ENCODE measurements at regions of chr1 and their contacts with region 1.

Region 1: DNA sequence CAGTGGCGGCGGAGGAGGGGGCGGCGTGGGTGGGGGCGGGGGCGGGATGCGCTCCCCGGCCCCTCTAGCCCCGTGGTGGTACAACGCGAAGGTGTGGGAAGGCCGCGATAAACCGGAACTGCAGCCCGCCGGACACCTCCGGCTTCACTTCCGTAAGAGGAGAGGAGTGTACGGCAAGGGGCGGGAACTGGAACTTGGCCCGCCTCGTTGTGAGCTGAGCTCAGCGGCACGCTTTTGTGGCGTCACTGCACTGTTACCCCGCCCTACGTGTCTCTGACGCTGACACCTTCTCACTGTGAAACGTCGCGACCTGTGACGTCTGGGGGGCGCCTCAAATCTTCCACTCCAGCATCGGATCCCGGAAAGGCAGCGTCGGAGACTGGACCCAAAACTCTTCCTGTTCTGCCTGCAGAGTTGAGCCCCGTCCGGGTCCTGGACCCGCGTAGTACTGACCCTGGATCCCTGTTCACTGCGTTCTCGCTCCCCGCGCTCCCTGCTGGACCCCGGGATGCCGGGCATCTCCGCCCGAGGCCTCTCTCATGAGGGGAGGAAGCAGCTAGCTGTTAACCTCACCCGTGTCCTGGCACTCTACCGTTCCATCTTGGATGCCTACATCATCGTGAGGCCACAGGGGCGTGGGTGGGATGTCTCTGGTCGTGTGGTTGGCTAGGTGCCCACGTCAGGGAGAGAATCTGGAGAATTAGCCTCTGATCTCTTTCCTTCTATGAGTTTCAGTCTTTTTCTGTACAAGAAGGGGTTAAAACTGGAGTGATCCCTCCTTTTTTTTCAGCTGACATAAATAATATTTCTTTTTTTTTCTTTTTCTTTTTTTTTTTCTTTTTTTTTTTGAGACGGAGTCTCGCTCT is at the start of gene ISG20L2:
- DNase-seq: peak; percentile 97
- ATAC-seq: peak; percentile 85
- H3K4me3 ChIP-seq: peak within 1 kb of the TSS; percentile 92 to 93
- H3K27ac ChIP-seq: peak within 1 kb of the TSS; percentile 81
- H3K4me1 ChIP-seq: peaks cover 24 to 34% of the 10 kb centered on the region in 2 experiments
- H3K27me3 ChIP-seq: no peaks in the 10 kb centered on the region
- CTCF ChIP-seq: no peak
- POLR2A ChIP-seq: no peak
- RAD21 ChIP-seq: no peak
- total RNA-seq, gene ISG20L2: 41.7 TPM

Region 2: DNA sequence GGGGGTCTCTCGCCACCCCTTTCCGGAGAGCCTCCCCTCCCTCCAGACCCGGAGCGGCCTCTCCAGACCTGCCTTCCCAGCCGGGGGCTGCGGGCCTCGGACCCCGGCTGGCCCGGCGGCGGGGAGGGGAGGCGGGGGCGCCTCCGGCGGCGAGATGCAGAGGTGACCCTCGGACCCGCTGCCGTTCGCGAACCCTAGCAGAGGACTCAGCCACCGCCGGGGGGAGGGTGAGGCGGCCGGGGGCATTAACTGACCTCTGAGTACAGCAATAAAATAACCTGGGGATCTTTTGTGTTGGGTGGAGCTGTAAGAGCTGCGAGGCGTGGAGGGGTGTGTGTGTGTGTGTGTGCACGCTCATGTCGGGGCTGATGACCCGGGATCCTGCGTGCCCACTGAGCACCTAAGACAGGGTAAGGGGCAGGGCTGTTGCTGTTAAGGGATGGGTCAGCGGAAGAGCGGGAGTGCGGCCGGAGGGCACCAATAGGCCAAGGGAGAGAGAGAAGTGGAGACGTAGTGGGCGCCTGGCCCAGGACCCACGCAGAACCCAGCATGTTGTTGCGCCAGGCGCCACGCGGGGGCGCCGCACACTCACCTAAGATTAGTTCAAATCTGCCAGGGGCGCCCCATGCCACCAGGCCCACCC is 103.3 kb before region 1 on chr1:
- CTCF ChIA-PET with region 1: interaction called, 13 read pairs
- POLR2A ChIA-PET with region 1: interaction called, 4 read pairs
- RAD21 ChIA-PET with region 1: no interaction called
- intact Hi-C with region 1: loop called (anchors 1 kb)
- DNase-seq: no peak
- ATAC-seq: peak; percentile 80
- H3K4me3 ChIP-seq: peak overlapping the region; percentile 33 to 46
- H3K27ac ChIP-seq: no peak overlapping the region
- H3K4me1 ChIP-seq: peaks cover 3 to 7% of the 10 kb centered on the region in 2 experiments; a peak in 2 of 4 replicates
- H3K27me3 ChIP-seq: no peaks in the 10 kb centered on the region
- CTCF ChIP-seq: peak; percentile 68 to 91 (median 84); a peak in 5 of 6 replicates
- POLR2A ChIP-seq: no peak
- RAD21 ChIP-seq: peak; percentile 73

Region 3: DNA sequence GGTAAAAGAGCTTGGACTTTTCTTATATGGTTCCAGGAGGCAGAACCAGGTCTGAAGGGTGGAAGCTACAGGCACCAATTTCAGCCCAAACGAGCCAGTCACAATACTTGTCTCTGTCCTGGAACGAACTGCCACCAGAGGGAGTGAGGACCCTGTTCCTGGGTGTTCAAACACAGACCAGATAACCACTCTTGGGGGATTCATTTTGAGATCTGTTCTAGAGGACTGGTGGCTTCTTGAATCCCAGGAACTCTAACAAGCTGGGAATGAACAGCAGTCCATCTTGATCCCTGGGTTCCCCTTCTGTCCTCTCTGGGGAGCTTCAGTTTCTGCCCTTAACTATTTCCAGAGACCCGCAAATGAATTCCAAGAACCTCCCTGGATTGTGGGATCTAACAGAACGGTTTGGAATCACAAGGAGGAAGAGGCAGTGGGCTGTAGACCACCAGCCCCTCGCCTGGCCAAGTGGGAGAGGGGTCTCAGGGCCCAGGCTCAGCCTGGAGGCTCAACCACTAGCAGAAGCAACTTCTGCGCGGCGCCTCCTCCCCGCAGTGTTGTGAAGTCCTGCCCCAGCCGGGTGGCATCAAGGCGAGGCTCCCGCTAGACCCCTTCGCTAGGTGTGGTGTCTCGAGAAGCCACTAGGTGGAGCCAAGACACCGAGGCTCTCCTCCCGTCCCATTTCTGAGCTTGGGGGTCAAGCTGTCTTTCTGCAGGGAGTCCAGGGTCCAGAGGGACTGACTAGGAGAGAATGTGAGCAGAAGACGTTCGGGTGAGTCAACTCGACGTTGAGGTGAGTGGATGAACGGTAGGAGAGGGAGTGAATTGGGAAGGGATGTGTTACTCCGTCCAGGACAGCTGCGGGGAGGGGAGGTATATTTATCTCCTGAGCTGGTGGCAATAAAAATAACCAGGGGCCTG is 39.5 kb before region 1 on chr1:
- CTCF ChIA-PET with region 1: interaction called, 508 read pairs
- POLR2A ChIA-PET with region 1: interaction called, 69 read pairs
- RAD21 ChIA-PET with region 1: interaction called, 62 to 67 read pairs
- intact Hi-C with region 1: loop called (anchors 1 kb)
- DNase-seq: peak; percentile 81
- ATAC-seq: peak; percentile 77
- H3K4me3 ChIP-seq: peak overlapping the region; percentile 41 to 55
- H3K27ac ChIP-seq: peak overlapping the region; percentile 49
- H3K4me1 ChIP-seq: peaks cover 70 to 90% of the 10 kb centered on the region in 2 experiments
- H3K27me3 ChIP-seq: no peaks in the 10 kb centered on the region
- CTCF ChIP-seq: peak in 2 of 3 experiments; percentile 69 to 87; a peak in 4 of 6 replicates
- POLR2A ChIP-seq: no peak
- RAD21 ChIP-seq: no peak

Region 4: DNA sequence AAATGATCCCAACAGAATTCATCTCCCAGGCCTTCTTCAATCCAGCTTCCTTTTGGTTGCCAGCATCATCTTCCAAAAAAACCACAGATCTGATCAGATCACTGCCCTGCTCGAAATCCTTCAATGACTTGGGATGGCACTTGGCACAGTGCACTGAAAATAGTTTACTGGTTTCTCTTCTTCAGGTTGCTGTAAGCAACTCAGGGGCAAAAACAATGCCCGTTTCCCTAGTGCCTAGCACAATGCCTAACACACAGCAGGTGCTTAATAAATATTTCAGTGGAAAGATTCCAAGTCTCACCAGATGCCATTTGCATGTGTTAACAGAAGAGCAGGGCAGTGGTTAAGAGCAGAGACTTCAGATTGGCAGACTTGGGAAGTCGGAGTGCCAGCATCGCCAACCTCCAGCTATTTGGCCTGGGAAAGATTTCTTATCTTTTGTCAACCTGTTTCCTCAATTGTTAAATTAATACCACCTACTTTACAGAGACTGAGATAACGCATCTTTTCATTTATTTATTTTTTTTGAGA is 11.5 kb before region 1 on chr1:
- CTCF ChIA-PET with region 1: interaction called, 59 read pairs
- POLR2A ChIA-PET with region 1: interaction called, 22 read pairs
- RAD21 ChIA-PET with region 1: no interaction called
- intact Hi-C with region 1: no loop called
- DNase-seq: no peak
- ATAC-seq: no peak
- H3K4me3 ChIP-seq: no peak overlapping the region
- H3K27ac ChIP-seq: no peak overlapping the region
- H3K4me1 ChIP-seq: peaks cover 27 to 29% of the 10 kb centered on the region in 2 experiments
- H3K27me3 ChIP-seq: no peaks in the 10 kb centered on the region
- CTCF ChIP-seq: no peak
- POLR2A ChIP-seq: no peak
- RAD21 ChIP-seq: no peak

Region 5: DNA sequence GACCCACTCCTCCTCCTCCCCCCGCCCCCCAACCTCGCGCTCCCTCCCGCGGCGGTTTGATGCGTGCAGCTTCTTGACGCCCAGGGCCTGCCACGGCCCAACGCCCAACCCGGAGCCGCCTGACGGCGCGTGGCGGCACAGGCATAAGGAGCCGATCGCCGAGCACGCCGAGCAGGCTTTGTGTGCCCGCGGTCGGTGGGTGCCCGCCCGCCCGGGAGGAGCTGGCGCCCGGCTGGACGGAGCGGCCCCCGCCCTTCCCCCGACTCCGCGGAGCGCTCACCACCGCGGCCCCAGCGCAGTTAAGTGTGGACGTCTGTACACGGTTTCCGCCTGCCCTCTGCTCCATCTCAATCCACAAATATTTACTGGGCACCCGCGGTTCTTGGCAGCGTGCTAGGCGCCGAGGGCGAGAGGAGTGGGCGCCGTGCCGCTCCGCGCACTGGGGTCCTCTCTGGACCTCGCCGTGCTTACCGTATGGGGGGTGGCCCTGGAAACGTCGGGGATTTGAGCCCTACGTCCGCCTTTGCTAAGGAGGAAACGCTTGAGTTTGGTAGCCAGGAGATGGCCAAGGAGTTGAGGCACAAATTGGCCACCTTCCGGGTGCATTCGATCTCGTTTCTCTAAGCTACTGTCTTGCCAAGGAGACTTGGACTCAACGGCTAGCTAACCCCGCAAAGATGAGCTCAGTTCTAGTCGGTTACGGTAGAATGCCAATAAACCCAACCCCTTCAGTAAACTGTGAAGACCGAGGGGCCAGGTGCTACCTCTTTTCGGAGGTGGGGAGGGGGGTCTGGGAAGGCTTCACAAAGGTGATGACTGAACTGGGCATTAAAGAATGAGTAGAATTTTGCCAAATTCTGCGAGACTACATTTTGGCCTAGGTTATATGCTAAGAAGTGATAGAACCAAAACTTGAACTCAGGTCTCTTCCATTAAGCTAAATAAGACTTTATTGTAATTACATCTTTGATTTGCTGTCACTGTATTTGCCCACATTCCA is 23.2 kb after region 1 on chr1:
- CTCF ChIA-PET with region 1: interaction called, 12 read pairs
- POLR2A ChIA-PET with region 1: interaction called, 11 read pairs
- RAD21 ChIA-PET with region 1: interaction called, 3 read pairs
- intact Hi-C with region 1: no loop called
- DNase-seq: peak; percentile 90
- ATAC-seq: peak; percentile 65
- H3K4me3 ChIP-seq: peak overlapping the region; percentile 67 to 97
- H3K27ac ChIP-seq: peak overlapping the region; percentile 99
- H3K4me1 ChIP-seq: peaks cover 22 to 43% of the 10 kb centered on the region in 2 experiments
- H3K27me3 ChIP-seq: no peaks in the 10 kb centered on the region
- CTCF ChIP-seq: no peak
- POLR2A ChIP-seq: peak; percentile 49
- RAD21 ChIP-seq: no peak

Region 6: DNA sequence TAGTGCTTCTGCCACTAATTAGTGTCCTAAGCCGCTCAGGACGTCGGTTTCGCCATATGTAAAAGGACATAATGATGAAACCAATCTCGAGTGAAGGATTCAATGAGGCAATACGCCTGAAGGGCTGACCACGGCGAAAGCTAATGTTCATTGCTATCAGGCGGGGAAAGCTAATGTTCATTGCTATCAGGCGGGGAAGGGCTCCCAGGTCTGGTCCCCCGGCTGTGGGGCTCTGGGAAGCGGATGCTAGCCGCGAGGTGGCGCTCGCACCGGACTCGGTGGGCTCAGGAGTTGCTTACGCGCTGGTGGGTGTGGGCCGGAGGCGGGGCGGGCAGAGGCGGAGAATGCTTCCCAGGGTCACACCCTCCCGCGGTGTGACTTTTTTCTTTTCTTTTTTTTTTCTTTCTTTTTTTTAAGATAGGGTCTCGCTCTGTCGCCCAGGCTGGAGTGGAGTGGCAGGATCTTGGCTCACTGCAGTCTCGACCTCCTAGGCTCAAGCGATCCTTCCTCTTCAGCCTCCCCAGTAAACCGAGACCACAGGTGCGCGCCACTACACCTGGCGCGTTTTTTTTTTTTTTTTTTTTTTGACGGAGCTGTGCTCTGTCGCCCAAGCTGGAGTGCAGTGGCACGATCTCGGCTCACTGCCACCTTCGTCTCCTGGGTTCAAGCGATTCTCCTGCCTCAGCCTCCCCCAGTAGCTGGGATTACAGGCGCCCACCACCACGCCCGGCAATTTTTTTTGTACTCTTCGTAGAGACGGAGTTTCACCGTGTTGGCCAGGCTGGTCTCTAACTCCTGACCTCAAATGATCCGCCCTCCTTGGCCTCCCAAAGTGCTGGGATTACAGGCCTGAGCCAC is 163.6 kb after region 1 on chr1:
- CTCF ChIA-PET with region 1: interaction called, 26 read pairs
- POLR2A ChIA-PET with region 1: no interaction called
- RAD21 ChIA-PET with region 1: interaction called, 3 to 5 read pairs
- intact Hi-C with region 1: loop called (anchors 1 kb)
- DNase-seq: peak; percentile 75
- ATAC-seq: peak; percentile 77
- H3K4me3 ChIP-seq: peak overlapping the region in 1 of 2 experiments; percentile 18; a peak in 1 of 4 replicates
- H3K27ac ChIP-seq: no peak overlapping the region
- H3K4me1 ChIP-seq: peaks cover 24 to 60% of the 10 kb centered on the region in 2 experiments
- H3K27me3 ChIP-seq: no peaks in the 10 kb centered on the region
- CTCF ChIP-seq: peak in 2 of 3 experiments; percentile 86 to 89; a peak in 4 of 6 replicates
- POLR2A ChIP-seq: no peak
- RAD21 ChIP-seq: no peak

Region 7: DNA sequence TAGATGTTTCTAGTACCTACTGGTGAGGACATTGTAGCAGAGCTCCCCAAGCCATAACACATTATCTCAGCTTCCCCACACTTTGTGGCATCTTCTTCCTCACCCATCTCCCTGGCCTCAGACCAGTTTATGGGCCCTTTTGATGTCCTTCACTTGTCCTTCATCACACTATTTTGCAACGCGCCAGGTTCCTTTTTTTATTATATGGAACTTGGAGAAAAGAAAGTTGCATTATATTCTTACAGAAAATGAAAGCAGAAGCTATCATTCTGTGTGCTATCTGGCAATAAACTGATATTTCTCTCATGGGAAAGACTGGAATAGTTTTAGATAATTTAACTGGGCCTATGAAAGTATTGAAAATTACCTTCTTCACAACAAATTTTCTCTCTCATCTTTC is 606.2 kb after region 1 on chr1:
- CTCF ChIA-PET with region 1: no interaction called
- POLR2A ChIA-PET with region 1: no interaction called
- RAD21 ChIA-PET with region 1: no interaction called
- intact Hi-C with region 1: no loop called
- DNase-seq: no peak
- ATAC-seq: no peak
- H3K4me3 ChIP-seq: no peak overlapping the region
- H3K27ac ChIP-seq: no peak overlapping the region
- H3K4me1 ChIP-seq: no peaks in the 10 kb centered on the region
- H3K27me3 ChIP-seq: peaks cover 41% of the 10 kb centered on the region
- CTCF ChIP-seq: no peak
- POLR2A ChIP-seq: no peak
- RAD21 ChIP-seq: no peak

Measured in HCT116 (cell line).